GM12878 (cell line): ENCODE measurements at regions of chr1 and their contacts with region 1.

Region 1: GRCh38 chr1:40315239-40315794 is 1.8 kb downstream of the COL9A2 start:
- DNase-seq: peak; percentile 53
- ATAC-seq: peak; percentile 72
- H3K4me3 ChIP-seq: peak overlapping the region; percentile 70
- H3K27ac ChIP-seq: peak overlapping the region; percentile 59
- H3K4me1 ChIP-seq: peaks cover 41% of the 10 kb centered on the region
- H3K27me3 ChIP-seq: peaks cover 4 to 9% of the 10 kb centered on the region in 2 experiments; a peak in 3 of 4 replicates
- CTCF ChIP-seq: peak; percentile 96 to 98 (median 98)
- EP300 ChIP-seq: peak in 1 of 2 experiments; percentile 24; a peak in 1 of 4 replicates
- POLR2A ChIP-seq: peak; percentile 87
- RAD21 ChIP-seq: peak; percentile 69

Region 2: GRCh38 chr1:40161125-40161887 is 154.0 kb before region 1 on chr1 and contains the start of gene RLF:
- CTCF ChIA-PET with region 1: interaction called, 5 read pairs
- POLR2A ChIA-PET with region 1: interaction called, 4 read pairs
- RAD21 ChIA-PET with region 1: interaction called, 14 read pairs
- SMC1A ChIA-PET with region 1: interaction called, 7 read pairs
- in situ Hi-C with region 1: no loop called
- intact Hi-C with region 1: loop called (anchors 2 kb)
- DNase-seq: peak; percentile 67
- ATAC-seq: peak; percentile 92
- H3K4me3 ChIP-seq: peak within 1 kb of the TSS; percentile 97
- H3K27ac ChIP-seq: peak within 1 kb of the TSS; percentile 93
- H3K4me1 ChIP-seq: no peaks in the 10 kb centered on the region
- H3K27me3 ChIP-seq: no peaks in the 10 kb centered on the region
- CTCF ChIP-seq: no peak
- EP300 ChIP-seq: no peak; a peak in 1 of 4 replicates
- POLR2A ChIP-seq: peak; percentile 99
- RAD21 ChIP-seq: no peak
- polyA plus RNA-seq, gene RLF: 2.0 to 3.6 TPM

Region 3: GRCh38 chr1:40241362-40241761 is 74.0 kb before region 1 on chr1:
- CTCF ChIA-PET with region 1: interaction called, 5 read pairs
- POLR2A ChIA-PET with region 1: interaction called, 10 read pairs
- RAD21 ChIA-PET with region 1: interaction called, 28 read pairs
- SMC1A ChIA-PET with region 1: interaction called, 7 read pairs
- in situ Hi-C with region 1: no loop called
- intact Hi-C with region 1: no loop called
- DNase-seq: no peak
- ATAC-seq: peak; percentile 41
- H3K4me3 ChIP-seq: no peak overlapping the region
- H3K27ac ChIP-seq: peak overlapping the region; percentile 60
- H3K4me1 ChIP-seq: peaks cover 13% of the 10 kb centered on the region
- H3K27me3 ChIP-seq: no peaks in the 10 kb centered on the region
- CTCF ChIP-seq: no peak
- EP300 ChIP-seq: no peak
- POLR2A ChIP-seq: no peak
- RAD21 ChIP-seq: no peak

Region 4: GRCh38 chr1:40291293-40291692 is 24.0 kb before region 1 on chr1:
- CTCF ChIA-PET with region 1: interaction called, 28 read pairs
- POLR2A ChIA-PET with region 1: interaction called, 3 read pairs
- RAD21 ChIA-PET with region 1: interaction called, 4 read pairs
- SMC1A ChIA-PET with region 1: interaction called, 11 read pairs
- in situ Hi-C with region 1: no loop called
- intact Hi-C with region 1: no loop called
- DNase-seq: no peak
- ATAC-seq: no peak
- H3K4me3 ChIP-seq: no peak overlapping the region
- H3K27ac ChIP-seq: no peak overlapping the region
- H3K4me1 ChIP-seq: no peaks in the 10 kb centered on the region
- H3K27me3 ChIP-seq: no peaks in the 10 kb centered on the region
- CTCF ChIP-seq: no peak
- EP300 ChIP-seq: no peak
- POLR2A ChIP-seq: no peak
- RAD21 ChIP-seq: no peak